Ovary (tissue), 10 donors: ENCODE measurements at regions of chrX and their contacts with region 1.

Region 1: DNA sequence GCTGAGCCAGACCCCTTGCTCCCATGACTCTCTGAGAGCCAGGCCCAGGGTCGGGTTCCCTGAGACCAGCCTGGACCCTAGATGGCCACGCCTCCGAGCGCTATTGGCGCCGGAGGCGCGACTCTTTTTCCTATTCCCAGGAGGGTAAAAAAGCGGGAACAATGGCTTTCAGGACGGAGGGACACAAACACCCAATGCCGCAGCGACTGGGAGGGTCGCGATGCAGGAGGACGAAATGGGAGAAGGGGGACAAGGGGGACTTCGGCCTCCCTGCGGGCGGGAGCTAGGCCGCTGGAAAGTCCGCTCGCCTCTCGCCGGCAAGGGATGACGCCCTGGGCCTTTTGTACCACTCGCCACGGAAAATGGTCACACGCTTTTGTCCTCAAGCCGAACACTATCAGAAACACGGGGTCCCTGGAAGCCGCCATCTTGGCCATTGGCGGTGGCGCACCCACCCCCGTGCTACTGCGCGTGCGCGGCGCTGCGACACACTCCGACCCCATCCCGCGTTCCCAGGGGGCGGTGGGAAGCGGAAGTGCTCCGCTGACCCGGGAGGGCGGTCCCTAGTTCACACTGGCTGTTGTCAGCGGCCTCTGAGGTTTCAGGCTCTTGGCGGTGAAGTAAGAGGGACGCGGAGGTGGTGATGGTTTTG is 98.4 kb downstream of the ZNF674 start:
- DNase-seq: peak; percentile 83 to 88 (median 87)
- H3K4me3 ChIP-seq: peak overlapping the region; percentile 57
- H3K27ac ChIP-seq: peak overlapping the region; percentile 69 to 71
- H3K4me1 ChIP-seq: no peaks in the 10 kb centered on the region
- H3K27me3 ChIP-seq: no peaks in the 10 kb centered on the region
- CTCF ChIP-seq: no peak
- EP300 ChIP-seq: no peak
- POLR2A ChIP-seq: peak; percentile 70

Region 2: DNA sequence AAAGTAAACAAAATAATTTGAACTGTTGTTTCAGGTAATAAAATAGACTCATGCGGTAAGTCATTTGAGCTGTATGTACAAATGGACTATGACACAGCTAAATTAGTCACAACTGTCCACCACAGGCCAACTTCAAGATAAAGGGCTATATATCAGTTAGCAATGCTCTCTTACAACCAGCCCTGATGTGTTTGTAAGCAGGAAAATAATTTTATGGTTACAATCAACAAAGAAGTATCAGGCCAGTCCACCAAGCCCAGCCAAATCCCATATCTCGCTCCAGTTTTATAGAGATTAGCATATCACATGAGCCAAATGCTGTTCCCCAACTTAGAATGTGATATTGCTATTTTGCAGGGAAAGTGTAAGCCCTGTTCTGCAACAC is 1603.5 kb before region 1 on chrX:
- intact Hi-C with region 1: loop called in 1 of 4 experiments (anchors 5 kb)
- DNase-seq: no peak
- H3K4me3 ChIP-seq: no peak overlapping the region
- H3K27ac ChIP-seq: no peak overlapping the region
- H3K4me1 ChIP-seq: no peaks in the 10 kb centered on the region
- H3K27me3 ChIP-seq: no peaks in the 10 kb centered on the region
- CTCF ChIP-seq: no peak
- EP300 ChIP-seq: no peak
- POLR2A ChIP-seq: no peak

Region 3: GRCh38 chrX:46386510-46386909 is 60.3 kb before region 1 on chrX:
- intact Hi-C with region 1: no loop called
- DNase-seq: no peak
- H3K4me3 ChIP-seq: no peak overlapping the region
- H3K27ac ChIP-seq: no peak overlapping the region
- H3K4me1 ChIP-seq: no peaks in the 10 kb centered on the region
- H3K27me3 ChIP-seq: no peaks in the 10 kb centered on the region
- CTCF ChIP-seq: no peak
- EP300 ChIP-seq: no peak
- POLR2A ChIP-seq: no peak

Region 4: GRCh38 chrX:46812445-46812844 is 365.6 kb after region 1 on chrX:
- intact Hi-C with region 1: no loop called
- DNase-seq: no peak
- H3K4me3 ChIP-seq: no peak overlapping the region
- H3K27ac ChIP-seq: no peak overlapping the region
- H3K4me1 ChIP-seq: no peaks in the 10 kb centered on the region
- H3K27me3 ChIP-seq: no peaks in the 10 kb centered on the region
- CTCF ChIP-seq: no peak
- EP300 ChIP-seq: no peak
- POLR2A ChIP-seq: no peak